ENCODE measurements at regions of chr3 and their contacts with region 1.

Region 1: DNA sequence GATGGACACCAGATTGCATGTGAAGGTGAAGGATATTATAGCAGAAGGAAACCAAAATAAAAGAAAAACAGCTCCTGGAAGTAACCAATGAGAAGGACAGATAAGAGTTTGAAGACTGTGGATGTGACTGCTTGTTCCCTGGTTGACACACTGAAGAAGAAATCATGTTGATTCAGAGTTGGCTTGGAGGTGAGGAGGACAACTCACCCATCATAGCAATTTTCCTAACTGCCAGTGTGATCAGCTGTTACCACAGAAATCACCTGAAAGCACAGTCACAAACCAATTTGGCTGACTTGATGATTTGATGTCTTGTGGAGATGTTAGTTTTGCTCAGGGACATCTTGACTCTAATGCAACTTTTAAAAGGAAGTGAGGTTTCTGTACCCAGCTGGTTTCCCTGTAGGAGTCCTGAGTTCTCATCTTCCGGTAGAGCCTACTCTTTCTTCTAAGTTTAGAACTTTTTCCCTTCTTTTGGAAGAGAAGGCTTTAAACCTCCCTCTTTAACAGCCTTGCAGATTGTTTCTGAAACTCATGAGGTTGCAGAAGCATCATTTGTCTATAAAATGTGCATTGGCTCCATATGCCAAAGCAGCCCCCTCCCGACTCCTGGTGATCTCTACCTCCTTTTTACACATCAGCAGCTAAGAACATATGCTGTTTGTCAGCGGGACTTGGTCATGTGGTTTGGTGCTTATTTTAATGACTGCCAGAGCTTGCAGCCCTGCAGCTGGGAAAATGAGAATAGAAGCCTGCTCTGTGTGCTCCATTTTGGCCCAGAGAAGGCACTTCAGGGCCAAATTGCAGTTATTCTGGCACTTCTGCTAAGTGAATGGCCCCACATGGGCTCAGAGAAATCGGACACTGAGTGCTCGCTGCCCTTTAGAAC is 10.3 kb downstream of the ATG7 start:
- DNase-seq: peak; percentile 59
- ATAC-seq: peak; percentile 35; the same call in 1 of the 2 replicates
- H3K4me3 ChIP-seq: no peak overlapping the region
- H3K27ac ChIP-seq: peak overlapping the region; percentile 94; the same call in 1 of the 2 replicates
- H3K4me1 ChIP-seq: peaks cover 27% of the 10 kb centered on the region
- H3K27me3 ChIP-seq: no peaks in the 10 kb centered on the region
- CTCF ChIP-seq: no peak
- POLR2A ChIP-seq: no peak
- RAD21 ChIP-seq: no peak

Region 2: DNA sequence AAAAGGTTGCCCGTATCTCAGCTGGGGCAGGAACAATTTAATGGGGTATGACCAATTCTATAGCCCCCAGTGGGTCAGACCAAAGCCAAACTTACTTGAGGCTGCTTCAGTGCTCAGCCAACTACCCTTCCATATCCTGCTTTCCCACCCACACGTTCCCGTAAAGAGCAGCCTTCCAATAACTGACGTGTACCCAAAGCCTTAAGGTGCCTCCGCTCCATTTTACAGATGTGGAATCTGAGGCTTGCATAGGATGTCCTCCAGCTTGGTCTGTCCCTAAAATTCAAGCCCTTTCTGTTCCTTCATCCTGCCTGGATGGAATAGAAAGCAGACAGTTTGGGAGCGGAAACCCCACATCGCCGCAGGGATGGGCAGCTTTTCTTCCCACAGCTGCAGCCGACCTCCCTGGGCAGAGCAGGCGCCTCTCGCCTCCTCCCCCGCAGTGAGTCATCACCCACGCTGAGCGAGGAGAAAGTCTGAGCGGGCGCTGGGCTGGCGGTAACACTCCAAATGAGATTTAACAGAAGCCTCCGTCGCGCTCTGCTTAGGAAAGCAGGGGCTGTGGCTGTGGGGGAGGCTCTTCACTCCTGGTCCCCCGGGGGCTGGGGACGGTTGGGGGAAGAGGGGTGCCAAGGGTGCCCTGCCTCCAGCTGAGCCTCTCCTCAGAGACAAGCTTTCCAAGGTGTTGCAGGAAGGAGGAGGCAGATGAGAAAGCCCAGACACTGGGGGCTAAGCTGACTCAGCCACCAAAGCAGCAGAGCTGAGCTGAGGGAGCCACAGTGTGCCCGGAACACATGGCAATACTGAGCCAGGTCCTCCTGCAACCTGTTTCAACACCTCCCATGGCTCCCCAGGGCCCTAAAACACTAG is 186.0 kb before region 1 on chr3:
- CTCF ChIA-PET with region 1: no interaction called
- POLR2A ChIA-PET with region 1: interaction called, 30 read pairs
- dilution Hi-C with region 1: no loop called
- in situ Hi-C with region 1: no loop called
- intact Hi-C with region 1: no loop called
- DNase-seq: peak; percentile 91
- ATAC-seq: peak; percentile 98
- H3K4me3 ChIP-seq: peak overlapping the region; percentile 27
- H3K27ac ChIP-seq: peak overlapping the region; percentile 63
- H3K4me1 ChIP-seq: peaks cover 9% of the 10 kb centered on the region
- H3K27me3 ChIP-seq: no peaks in the 10 kb centered on the region
- CTCF ChIP-seq: no peak
- POLR2A ChIP-seq: peak; percentile 78
- RAD21 ChIP-seq: peak; percentile 35

Region 3: GRCh38 chr3:11260460-11260859 is 22.0 kb before region 1 on chr3:
- CTCF ChIA-PET with region 1: no interaction called
- POLR2A ChIA-PET with region 1: interaction called, 13 read pairs
- dilution Hi-C with region 1: no loop called
- in situ Hi-C with region 1: no loop called
- intact Hi-C with region 1: no loop called
- DNase-seq: no peak
- ATAC-seq: no peak
- H3K4me3 ChIP-seq: no peak overlapping the region
- H3K27ac ChIP-seq: no peak overlapping the region
- H3K4me1 ChIP-seq: no peaks in the 10 kb centered on the region; the same call in 1 of the 2 replicates
- H3K27me3 ChIP-seq: no peaks in the 10 kb centered on the region
- CTCF ChIP-seq: no peak
- POLR2A ChIP-seq: no peak
- RAD21 ChIP-seq: no peak